AG04450 (cell line): ENCODE measurements at regions of chr2 and their contacts with region 1.

Region 1: DNA sequence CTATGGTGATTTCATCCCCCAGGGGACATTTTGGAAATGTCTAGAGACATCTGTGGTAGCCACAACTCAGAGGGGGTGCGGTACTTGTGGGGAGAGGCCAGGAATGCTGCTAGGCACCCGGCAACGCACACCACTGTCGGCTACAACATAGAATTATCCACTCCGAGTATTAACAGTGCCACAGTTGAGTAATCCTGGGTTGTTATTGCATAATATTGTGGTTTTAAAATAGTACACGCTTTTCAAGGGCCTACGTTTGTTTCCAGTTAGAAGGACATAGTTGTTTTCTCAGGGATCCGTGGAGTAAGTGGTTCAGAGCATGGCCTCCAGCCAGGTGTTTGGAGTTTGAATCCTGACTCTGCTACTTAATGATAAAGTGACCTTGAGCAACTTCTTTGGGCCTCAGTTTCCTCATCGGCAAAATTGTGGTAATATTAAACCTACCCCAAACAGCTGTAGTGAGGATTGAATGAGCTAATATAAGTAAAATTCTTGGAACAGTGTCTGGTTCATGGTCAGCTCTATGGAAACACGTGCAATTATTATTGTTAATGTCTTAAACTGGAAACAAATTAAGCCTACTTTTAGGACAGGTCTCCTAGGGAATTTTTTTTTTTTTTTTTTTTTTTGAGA is 24.5 kb downstream of the CYP27A1 start:
- DNase-seq: peak; percentile 84
- H3K4me3 ChIP-seq: no peak overlapping the region
- H3K27ac ChIP-seq: peak overlapping the region; percentile 34
- H3K27me3 ChIP-seq: no peaks in the 10 kb centered on the region
- CTCF ChIP-seq: no peak

Region 2: DNA sequence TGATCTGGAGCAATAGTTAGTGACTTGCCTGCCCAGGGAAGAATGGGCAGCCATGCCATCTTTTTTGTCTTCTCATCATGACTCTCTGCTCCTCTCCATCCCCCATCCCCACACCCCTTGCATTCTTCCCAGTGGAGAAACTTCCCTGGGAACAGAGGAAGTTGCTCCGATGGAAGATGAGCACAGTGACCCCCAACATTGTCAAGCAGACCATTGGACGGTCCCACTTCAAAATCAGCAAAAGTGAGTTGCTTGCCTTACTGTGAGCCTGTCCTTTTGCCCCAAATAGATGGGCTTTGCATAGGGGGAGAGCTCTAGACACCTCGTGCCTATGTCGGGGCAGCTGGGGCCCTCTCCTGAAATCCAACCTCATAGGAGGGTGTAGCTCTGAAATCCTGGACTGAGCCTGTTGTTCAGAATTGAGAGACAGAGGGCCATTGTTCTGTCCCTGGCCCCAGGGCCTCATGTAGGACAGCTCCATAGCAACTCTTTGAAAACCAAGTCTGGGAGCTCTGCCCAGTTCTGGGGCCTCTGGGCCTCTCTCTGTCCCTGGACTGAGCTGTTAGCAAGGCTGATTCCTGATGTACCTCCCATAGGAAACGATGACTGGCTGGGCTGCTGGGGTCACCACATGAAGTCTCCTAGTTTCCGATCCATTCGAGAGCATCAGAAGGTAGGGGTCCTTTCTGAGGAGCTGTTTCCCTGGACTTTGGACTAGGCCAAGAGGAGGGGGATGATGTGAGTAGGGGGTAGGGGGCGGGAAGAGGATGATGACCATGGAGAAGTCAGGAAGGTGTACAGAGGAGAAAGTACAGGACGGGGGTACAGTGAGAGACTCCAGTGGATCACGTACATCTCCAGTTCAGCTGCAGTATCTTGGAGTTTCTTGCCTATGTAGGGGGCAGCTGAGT is 60.6 kb before region 1 on chr2:
- CTCF ChIA-PET with region 1: no interaction called
- POLR2A ChIA-PET with region 1: interaction called, 10 read pairs
- DNase-seq: no peak
- H3K4me3 ChIP-seq: no peak overlapping the region
- H3K27ac ChIP-seq: no peak overlapping the region
- H3K27me3 ChIP-seq: no peaks in the 10 kb centered on the region
- CTCF ChIP-seq: no peak

Region 3: GRCh38 chr2:218824004-218824403 is 17.5 kb after region 1 on chr2:
- CTCF ChIA-PET with region 1: no interaction called
- POLR2A ChIA-PET with region 1: no interaction called
- DNase-seq: no peak
- H3K4me3 ChIP-seq: no peak overlapping the region
- H3K27ac ChIP-seq: no peak overlapping the region
- H3K27me3 ChIP-seq: peaks cover 31% of the 10 kb centered on the region
- CTCF ChIP-seq: no peak

Region 4: GRCh38 chr2:219095406-219095935 is 289.0 kb after region 1 on chr2:
- CTCF ChIA-PET with region 1: interaction called, 10 read pairs
- POLR2A ChIA-PET with region 1: no interaction called
- DNase-seq: no peak
- H3K4me3 ChIP-seq: no peak overlapping the region
- H3K27ac ChIP-seq: no peak overlapping the region
- H3K27me3 ChIP-seq: no peaks in the 10 kb centered on the region
- CTCF ChIP-seq: no peak